Activated CD8-positive, alpha-beta memory T cell treated with anti-CD3 and anti-CD28 coated beads, Interleukin-2, amount 10 ng/mL, durations not matched to agents 7 days and 5 days (primary cell): ENCODE measurements at regions of chr7 and their contacts with region 1.

Region 1: DNA sequence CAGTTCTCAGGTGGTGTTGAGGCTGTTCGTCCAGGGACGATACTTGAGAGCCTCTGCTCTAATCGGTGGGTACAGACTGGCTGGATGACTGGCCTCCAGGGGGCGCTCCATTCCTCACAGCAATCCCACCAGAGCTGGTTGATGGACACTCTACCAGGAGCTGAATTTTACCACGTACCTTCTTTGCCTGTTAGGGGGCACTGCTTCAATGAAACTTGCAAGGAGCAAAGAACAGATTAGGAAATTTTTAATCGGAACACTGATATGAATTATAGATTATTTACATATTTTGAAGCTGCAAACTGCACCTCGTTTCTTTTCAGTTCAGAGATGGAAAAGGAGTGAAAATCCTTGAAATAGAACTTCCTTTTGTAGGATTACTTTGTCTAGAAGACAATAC is 44.9 kb downstream of the KBTBD2 start:
- DNase-seq: peak; percentile 93
- ATAC-seq: peak; percentile 100
- H3K4me3 Mint-ChIP-seq: no peak overlapping the region
- H3K27ac Mint-ChIP-seq: no peak overlapping the region
- H3K4me1 Mint-ChIP-seq: peaks cover 20% of the 10 kb centered on the region
- H3K27me3 Mint-ChIP-seq: peaks cover 28% of the 10 kb centered on the region

Region 2: DNA sequence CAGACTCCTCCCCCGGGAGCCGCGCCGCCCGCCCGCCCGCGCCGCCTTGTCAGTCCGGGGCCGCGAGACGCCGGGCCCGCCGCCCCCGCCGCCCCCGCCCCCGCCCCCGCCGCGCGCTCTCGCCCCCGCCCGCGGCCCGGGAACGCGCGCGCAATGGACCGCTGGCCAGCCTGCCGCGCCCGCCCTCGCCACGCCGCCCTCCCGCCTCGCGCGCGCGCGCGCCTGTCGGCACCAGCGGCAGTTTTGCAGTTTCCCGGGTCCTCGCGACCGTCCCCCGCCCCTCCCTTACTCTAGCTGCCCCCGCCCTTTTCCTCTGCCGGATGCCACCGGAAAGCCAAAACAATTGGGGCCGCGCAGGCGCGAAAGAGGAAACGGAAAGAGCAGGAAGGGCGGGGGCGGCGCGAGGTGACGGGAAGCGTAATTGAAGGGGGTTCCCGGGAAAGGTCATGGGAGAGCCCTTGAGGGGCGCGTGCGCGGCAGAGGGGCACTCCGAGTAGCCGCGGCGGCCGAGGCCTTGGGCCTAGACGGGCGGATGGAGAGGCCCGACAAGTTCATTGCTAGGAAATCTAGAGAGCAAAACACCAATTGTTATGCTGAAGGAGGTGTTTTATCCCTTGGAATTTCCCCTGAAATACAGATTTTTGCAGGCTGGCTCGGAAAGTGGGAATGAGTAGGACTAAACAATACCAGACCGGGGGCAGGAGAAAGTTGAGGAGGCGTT is 45.3 kb after region 1 on chr7:
- CTCF ChIA-PET with region 1: interaction called, 39 read pairs
- DNase-seq: peak; percentile 98
- ATAC-seq: peak; percentile 66
- H3K4me3 Mint-ChIP-seq: peak overlapping the region; percentile 78
- H3K27ac Mint-ChIP-seq: peak overlapping the region; percentile 92
- H3K4me1 Mint-ChIP-seq: peaks cover 46% of the 10 kb centered on the region
- H3K27me3 Mint-ChIP-seq: no peaks in the 10 kb centered on the region

Region 3: DNA sequence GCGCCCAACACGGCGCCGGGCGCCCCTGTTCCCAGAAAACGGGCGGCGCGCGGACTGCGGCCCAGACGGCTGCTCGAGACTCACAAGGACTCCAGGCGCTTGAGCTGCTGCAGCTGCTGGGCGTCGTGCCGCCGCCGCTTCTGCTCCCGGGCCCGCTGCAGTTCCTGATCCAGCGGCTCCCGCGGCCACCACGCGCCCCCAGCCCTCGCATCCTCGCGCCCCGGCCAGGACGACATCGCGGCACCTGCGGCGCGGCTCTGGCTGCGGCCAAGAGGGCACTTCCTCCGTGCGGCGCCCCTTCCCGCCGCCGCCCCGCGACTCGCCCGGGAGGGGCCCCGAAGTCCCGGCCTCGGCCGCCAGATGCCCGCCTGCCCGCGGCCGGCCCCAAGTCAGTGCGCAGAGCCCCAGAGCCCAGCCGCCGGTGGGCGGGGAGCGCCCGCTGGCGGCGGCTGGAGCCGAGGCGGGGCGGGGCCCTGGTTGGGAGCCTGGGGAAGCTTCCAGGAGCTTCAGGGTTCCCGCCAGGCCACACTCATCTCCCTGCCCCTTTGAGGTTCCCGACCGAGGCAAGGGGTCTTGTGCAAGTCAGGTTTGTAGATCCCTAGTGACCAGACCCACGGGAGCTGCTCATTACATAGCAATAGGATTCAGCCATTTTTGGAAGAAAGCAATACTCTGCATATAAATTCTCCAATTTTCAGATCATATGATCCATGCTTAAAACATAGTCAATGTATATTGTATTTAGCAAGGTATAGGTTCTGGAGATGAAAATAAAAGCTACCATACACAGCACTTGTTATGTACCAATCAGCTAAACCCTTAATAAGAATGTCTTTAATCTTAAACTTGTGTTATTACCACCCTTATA is 96.3 kb after region 1 on chr7:
- CTCF ChIA-PET with region 1: interaction called, 44 read pairs
- DNase-seq: peak; percentile 71
- ATAC-seq: peak; percentile 89
- H3K4me3 Mint-ChIP-seq: peak overlapping the region; percentile 82
- H3K27ac Mint-ChIP-seq: no peak overlapping the region
- H3K4me1 Mint-ChIP-seq: peaks cover 22% of the 10 kb centered on the region
- H3K27me3 Mint-ChIP-seq: peaks cover 25% of the 10 kb centered on the region

Region 4: GRCh38 chr7:33040803-33041516 is 194.3 kb after region 1 on chr7:
- CTCF ChIA-PET with region 1: interaction called, 13 read pairs
- DNase-seq: peak; percentile 84
- ATAC-seq: peak; percentile 98
- H3K4me3 Mint-ChIP-seq: peak overlapping the region; percentile 80
- H3K27ac Mint-ChIP-seq: peak overlapping the region; percentile 83
- H3K4me1 Mint-ChIP-seq: peaks cover 42% of the 10 kb centered on the region
- H3K27me3 Mint-ChIP-seq: no peaks in the 10 kb centered on the region

Region 5: DNA sequence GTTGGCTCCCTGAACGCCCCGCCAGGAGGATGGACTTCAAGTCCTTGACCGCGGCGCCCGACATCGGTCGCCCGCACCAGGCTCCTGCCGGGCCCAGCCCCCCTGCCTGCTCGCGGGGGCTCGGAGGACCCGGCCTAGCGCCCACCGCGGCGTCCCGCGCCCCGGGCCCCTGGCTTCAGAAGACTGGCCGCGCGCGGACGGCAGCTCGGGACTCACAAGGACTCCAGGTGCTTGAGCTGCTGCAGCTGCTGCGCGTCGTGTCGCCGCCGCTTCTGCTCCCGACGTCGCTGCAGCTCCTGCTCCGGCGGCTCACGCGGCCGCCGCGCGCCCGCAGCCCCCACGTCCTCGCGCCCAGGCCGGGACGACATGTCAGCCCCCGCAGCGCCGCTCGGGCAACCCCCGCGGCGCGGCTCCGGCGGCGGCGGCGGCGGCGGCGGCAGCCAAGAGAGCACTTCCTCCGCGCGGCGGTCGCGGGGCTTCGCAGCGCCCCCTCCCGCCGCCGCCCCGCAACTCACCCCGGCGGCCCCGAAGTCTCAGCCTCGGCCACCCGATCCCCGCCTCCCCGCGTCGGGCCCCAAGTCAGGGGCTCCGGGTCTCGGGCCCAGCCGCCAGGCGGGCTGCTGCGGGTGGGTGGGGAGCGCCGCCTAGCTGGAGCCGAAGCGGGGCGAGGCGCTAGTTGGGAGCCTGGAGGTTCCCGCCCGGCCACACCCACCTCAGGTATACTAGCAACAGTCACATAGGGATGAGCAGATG is 262.5 kb after region 1 on chr7 and contains the start of gene RP9:
- CTCF ChIA-PET with region 1: interaction called, 59 read pairs
- DNase-seq: peak; percentile 79
- ATAC-seq: peak; percentile 91
- H3K4me3 Mint-ChIP-seq: peak within 1 kb of the TSS; percentile 91
- H3K27ac Mint-ChIP-seq: peak within 1 kb of the TSS; percentile 79
- H3K4me1 Mint-ChIP-seq: peaks cover 27% of the 10 kb centered on the region
- H3K27me3 Mint-ChIP-seq: peaks cover 21% of the 10 kb centered on the region
- total RNA-seq, gene RP9: 11.3 to 11.5 TPM